ENCODE measurements at regions of chr7 and their contacts with region 1.

Region 1: GRCh38 chr7:23254051-23254681 is 7.6 kb downstream of the GPNMB start:
- DNase-seq: no peak
- H3K4me3 ChIP-seq: no peak overlapping the region
- H3K27ac ChIP-seq: no peak overlapping the region
- H3K4me1 ChIP-seq: no peaks in the 10 kb centered on the region
- CTCF ChIP-seq: no peak

Region 2: DNA sequence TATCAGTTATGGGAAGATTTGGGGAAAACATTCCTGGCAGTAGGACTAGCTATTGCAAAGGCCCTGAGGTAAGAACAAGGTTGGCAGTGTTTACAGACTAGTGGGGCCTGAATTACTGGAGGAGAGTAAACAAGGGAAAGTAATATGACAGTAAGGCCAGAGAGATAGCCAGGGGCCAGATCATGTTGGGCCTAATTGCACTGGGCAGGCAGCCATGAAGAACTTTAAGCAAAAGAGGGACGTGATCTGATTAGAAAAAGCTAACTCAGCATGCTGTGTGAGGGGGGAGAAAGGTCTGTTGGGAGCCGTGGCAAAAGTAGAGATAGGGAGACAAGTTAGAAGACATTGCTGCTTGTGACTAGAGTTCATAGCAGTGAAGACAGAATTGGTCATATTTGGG is 63.1 kb before region 1 on chr7:
- CTCF ChIA-PET with region 1: no interaction called
- POLR2A ChIA-PET with region 1: no interaction called
- intact Hi-C with region 1: no loop called
- DNase-seq: no peak
- H3K4me3 ChIP-seq: no peak overlapping the region
- H3K27ac ChIP-seq: no peak overlapping the region
- H3K4me1 ChIP-seq: no peaks in the 10 kb centered on the region
- CTCF ChIP-seq: no peak

Region 3: DNA sequence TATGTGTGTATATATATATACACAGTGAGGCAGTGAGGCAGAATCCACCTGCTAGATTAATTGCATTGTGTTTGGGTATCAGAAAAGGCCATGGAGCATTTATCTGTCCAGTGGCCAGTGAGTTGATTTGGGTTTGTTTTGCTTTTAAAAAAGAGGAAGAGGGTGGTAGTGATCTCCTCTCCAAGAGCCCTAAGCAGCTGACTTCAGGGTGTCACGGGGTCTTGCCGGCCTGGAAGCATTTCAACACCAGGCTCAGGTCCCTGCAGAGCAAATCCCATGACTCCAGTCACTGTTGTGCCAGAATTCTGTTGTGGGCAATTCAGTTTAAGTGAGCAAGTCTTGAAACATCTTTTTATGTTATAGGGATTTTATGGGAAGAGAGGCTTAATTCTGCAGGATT is 38.1 kb before region 1 on chr7:
- CTCF ChIA-PET with region 1: no interaction called
- POLR2A ChIA-PET with region 1: interaction called, 3 read pairs
- intact Hi-C with region 1: loop called (anchors 1 kb)
- DNase-seq: no peak
- H3K4me3 ChIP-seq: no peak overlapping the region
- H3K27ac ChIP-seq: no peak overlapping the region
- H3K4me1 ChIP-seq: no peaks in the 10 kb centered on the region
- CTCF ChIP-seq: no peak

Measured in OCI-LY7 (cell line).